Right ventricle myocardium inferior (tissue), 1 donor: ENCODE measurements at regions of chr3 and their contacts with region 1.

Region 1: GRCh38 chr3:146823622-146824021 is 218.5 kb upstream of the PLSCR5 start:
- DNase-seq: no peak
- ATAC-seq: peak; percentile 93

Region 2: DNA sequence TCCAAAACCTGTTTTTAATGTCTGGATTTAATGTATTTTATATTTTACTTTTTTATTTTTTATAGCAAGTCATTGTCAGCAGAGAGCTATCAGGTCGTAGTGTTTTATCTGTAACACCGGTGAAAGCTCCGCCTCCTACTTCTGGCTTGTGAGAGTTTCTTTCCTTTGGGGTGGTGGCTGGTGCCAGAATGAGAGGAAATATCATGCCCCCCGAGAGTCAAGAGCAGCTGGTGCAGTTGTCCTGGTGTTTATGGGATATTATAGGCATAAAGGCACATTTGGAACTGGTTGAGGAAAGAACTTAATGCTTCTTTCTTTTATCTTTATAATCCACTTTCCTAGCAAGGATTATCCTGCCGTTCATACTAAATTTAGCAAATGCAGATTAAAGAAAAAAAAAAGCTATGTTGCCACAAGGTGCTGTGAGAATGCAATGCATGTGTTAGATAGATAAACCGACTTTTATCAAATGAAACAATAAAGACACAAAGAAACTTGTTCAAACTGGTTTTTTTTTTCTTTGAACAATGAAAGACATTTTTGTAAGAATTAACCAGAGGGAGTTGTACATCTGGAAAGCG is 41.6 kb after region 1 on chr3:
- intact Hi-C with region 1: loop called (anchors 5 kb)
- DNase-seq: no peak
- ATAC-seq: no peak

Region 3: DNA sequence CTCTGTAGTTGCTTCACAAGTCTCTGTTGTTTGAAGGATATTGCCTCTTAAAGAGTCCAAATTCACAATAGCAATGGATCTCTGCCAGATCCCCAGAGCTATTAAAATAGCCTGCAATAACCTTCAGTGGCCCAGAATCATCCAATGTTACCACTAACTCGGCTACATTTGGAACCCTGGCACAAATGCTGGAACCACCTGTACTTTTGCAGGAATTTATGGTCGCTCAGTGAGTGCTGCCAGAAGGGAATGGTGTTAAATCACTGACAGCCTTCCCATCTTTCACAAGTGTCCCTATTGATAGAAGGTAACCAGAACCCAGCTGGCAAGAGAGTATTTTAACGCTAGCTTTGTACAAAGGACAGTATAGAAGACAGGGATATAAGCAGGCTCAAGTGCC is 80.3 kb after region 1 on chr3:
- intact Hi-C with region 1: loop called (anchors 2 kb)
- DNase-seq: no peak
- ATAC-seq: peak; percentile 98

Region 4: GRCh38 chr3:148162132-148162531 is 1338.5 kb after region 1 on chr3:
- intact Hi-C with region 1: no loop called
- DNase-seq: no peak
- ATAC-seq: no peak